Heart right ventricle (tissue), 16 donors: ENCODE measurements at regions of chr11 and their contacts with region 1.

Region 1: DNA sequence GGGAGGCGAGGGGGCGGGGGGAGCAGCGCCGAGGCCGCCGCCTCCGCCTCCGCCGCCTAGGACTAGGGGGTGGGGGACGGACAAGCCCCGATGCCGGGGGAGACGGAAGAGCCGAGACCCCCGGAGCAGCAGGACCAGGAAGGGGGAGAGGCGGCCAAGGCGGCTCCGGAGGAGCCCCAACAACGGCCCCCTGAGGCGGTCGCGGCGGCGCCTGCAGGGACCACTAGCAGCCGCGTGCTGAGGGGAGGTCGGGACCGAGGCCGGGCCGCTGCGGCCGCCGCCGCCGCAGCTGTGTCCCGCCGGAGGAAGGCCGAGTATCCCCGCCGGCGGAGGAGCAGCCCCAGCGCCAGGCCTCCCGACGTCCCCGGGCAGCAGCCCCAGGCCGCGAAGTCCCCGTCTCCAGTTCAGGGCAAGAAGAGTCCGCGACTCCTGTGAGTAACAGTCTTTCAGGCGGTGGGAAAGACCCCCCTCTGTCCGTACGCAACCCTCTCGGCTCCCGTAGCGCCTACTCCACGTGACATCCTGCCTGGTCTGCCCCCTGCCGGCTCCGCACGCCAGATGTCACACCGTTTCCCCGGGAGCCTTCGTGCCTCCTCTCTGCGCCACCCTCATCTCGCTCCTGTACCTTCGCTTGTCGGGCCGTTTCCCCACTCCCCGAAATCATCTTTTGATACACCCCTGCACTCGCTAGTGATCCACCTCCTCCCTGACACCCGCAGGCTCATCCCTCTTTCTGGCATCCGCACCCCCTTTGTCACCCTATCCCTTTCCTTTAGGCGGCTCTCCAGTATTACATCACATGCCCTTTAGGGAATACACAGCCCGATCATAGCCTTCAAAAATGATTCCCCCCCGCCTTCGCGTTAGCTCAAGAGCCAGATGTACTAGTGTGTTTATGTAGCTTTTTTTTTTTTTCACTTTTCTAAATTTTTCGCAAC is 598 bp downstream of the ZFP91 start:
- DNase-seq: peak; percentile 92 to 95
- ATAC-seq: peak; percentile 60 to 85 (median 72)
- H3K4me3 ChIP-seq: peak overlapping the region; percentile 69 to 99 (median 90)
- H3K27ac ChIP-seq: peak overlapping the region; percentile 95 to 100 (median 99)
- H3K4me1 ChIP-seq: peaks cover 12 to 76% (median 59%) of the 10 kb centered on the region in 9 donors
- H3K27me3 ChIP-seq: no peaks in the 10 kb centered on the region
- CTCF ChIP-seq: peak; percentile 66 to 94 (median 84)

Region 2: DNA sequence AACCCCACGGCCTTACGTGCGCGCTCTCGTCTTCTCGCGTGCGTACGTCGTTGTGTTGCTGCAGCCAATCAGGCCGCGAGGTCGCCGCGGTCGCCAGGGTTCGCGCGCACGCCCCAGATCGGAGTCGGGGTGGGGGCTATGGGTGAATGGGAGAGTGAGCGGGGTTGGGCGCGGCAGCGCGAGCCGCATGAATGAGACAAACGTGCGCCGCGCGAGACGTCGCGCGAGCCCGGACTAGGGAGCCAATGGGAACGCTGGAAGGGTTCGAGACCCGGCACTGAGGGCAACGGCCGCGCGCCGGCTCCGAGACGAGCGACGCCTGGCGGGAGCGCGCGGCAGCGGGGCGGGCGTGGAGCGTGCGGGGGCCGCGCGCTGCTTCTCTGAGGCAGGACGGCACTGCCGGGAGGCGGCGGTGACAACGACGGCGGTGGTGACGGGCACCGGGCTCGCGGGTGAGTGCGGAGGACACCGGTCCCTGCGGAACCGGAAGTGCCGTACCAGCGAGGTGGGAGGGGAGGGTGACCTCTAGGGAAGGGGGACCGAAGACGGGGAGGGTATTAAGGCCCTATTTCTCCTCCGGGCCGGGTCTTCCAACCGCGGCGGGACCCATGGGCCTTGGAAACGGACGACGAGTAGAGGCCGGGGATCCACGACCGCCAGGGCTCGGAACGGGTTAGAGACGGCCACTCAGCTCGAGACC is 911.6 kb before region 1 on chr11 and contains the start of gene ZDHHC5:
- intact Hi-C with region 1: loop called in 2 of 10 experiments (anchors 2 kb)
- DNase-seq: peak; percentile 99
- ATAC-seq: peak; percentile 94 to 97 (median 97)
- H3K4me3 ChIP-seq: peak within 1 kb of the TSS; percentile 75 to 100 (median 82)
- H3K27ac ChIP-seq: peak within 1 kb of the TSS; percentile 87 to 99 (median 97)
- H3K4me1 ChIP-seq: peaks cover 0 to 43% (median 27%) of the 10 kb centered on the region in 9 donors
- H3K27me3 ChIP-seq: no peaks in the 10 kb centered on the region
- CTCF ChIP-seq: peak; percentile 3 to 76 (median 62)
- total RNA-seq, gene ZDHHC5: 32.6 to 56.5 (median 41.6) TPM

Region 3: GRCh38 chr11:58609723-58610122 is 30.3 kb after region 1 on chr11:
- intact Hi-C with region 1: no loop called
- DNase-seq: no peak
- ATAC-seq: no peak
- H3K4me3 ChIP-seq: no peak overlapping the region
- H3K27ac ChIP-seq: no peak overlapping the region
- H3K4me1 ChIP-seq: peaks cover 0 to 28% (median 11%) of the 10 kb centered on the region in 9 donors
- H3K27me3 ChIP-seq: no peaks in the 10 kb centered on the region
- CTCF ChIP-seq: no peak

Region 4: DNA sequence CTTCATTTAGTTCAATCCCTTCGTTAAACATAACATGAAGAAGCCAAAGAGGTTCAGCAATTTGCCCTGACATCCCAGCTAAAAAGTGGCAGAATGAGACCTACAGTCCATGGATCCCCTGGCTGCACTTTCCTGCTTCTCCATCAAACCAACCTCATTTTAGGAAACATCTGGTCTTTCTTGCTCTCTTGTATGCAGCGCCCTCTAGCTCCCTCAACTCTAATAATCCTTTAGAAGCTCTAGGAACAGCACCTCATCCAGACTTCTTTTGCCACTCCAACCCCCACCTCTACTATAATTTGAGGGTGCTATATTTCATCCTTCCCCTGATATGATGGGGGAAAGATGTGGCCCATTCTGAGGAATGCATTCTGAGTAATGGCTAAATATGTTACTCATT is 50.4 kb after region 1 on chr11:
- intact Hi-C with region 1: loop called in 5 of 10 experiments (anchors 5 to 10 kb)
- DNase-seq: peak in 1 of 2 donors; percentile 39
- ATAC-seq: peak in 3 of 8 donors; percentile 41 to 59 (median 42)
- H3K4me3 ChIP-seq: no peak overlapping the region
- H3K27ac ChIP-seq: no peak overlapping the region
- H3K4me1 ChIP-seq: peaks cover 0 to 26% (median 11%) of the 10 kb centered on the region in 9 donors
- H3K27me3 ChIP-seq: no peaks in the 10 kb centered on the region
- CTCF ChIP-seq: peak in 8 of 9 donors; percentile 28 to 65 (median 56)

Region 5: GRCh38 chr11:58788355-58789023 is 209.0 kb after region 1 on chr11:
- intact Hi-C with region 1: loop called in 2 of 10 experiments (anchors 10 kb)
- DNase-seq: peak in 1 of 2 donors; percentile 8
- ATAC-seq: peak in 7 of 8 donors; percentile 34 to 76 (median 53)
- H3K4me3 ChIP-seq: no peak overlapping the region
- H3K27ac ChIP-seq: no peak overlapping the region
- H3K4me1 ChIP-seq: no peaks in the 10 kb centered on the region
- H3K27me3 ChIP-seq: peaks cover 0 to 14% (median 0%) of the 10 kb centered on the region in 7 donors
- CTCF ChIP-seq: peak; percentile 31 to 79 (median 63)

Region 6: GRCh38 chr11:59550368-59550841 is 970.9 kb after region 1 on chr11:
- intact Hi-C with region 1: loop called in 1 of 10 experiments (anchors 10 kb)
- DNase-seq: peak; percentile 67 to 71
- ATAC-seq: peak; percentile 79 to 93 (median 88)
- H3K4me3 ChIP-seq: peak overlapping the region; percentile 2 to 61 (median 50)
- H3K27ac ChIP-seq: peak overlapping the region; percentile 37 to 85 (median 78)
- H3K4me1 ChIP-seq: peaks cover 0 to 40% (median 9%) of the 10 kb centered on the region in 9 donors
- H3K27me3 ChIP-seq: no peaks in the 10 kb centered on the region
- CTCF ChIP-seq: peak in 7 of 9 donors; percentile 32 to 63 (median 50)